ENCODE measurements at regions of chr9 and their contacts with region 1.

Region 1: GRCh38 chr9:108933718-108934322 is at the start of gene ELP1:
- DNase-seq: peak; percentile 98
- H3K4me3 ChIP-seq: peak within 1 kb of the TSS; percentile 63 to 99 (median 86)
- H3K27ac ChIP-seq: peak within 1 kb of the TSS; percentile 79 to 93 (median 92)
- H3K4me1 ChIP-seq: peaks cover 8 to 46% (median 34%) of the 10 kb centered on the region in 6 donors
- H3K27me3 ChIP-seq: no peaks in the 10 kb centered on the region
- CTCF ChIP-seq: peak in 7 of 11 experiments; percentile 15 to 37 (median 26)
- POLR2A ChIP-seq: no peak
- total RNA-seq, gene ELP1: 13.6 to 30.5 (median 19.1) TPM

Region 2: GRCh38 chr9:109012876-109013678 is 79.3 kb after region 1 on chr9 and contains the start of gene CTNNAL1:
- intact Hi-C with region 1: loop called (anchors 10 kb)
- DNase-seq: peak; percentile 97
- H3K4me3 ChIP-seq: peak within 1 kb of the TSS; percentile 73 to 82 (median 78)
- H3K27ac ChIP-seq: peak within 1 kb of the TSS; percentile 84 to 91 (median 88)
- H3K4me1 ChIP-seq: peaks cover 7 to 55% (median 33%) of the 10 kb centered on the region in 6 donors
- H3K27me3 ChIP-seq: peaks cover 0 to 4% (median 0%) of the 10 kb centered on the region in 7 donors
- CTCF ChIP-seq: no peak
- POLR2A ChIP-seq: peak in 2 of 3 donors; percentile 10 to 89
- total RNA-seq, gene CTNNAL1: 26.2 to 43.2 (median 37.3) TPM